ENCODE measurements at regions of chr2 and their contacts with region 1.

Region 1: GRCh38 chr2:85826990-85827878 is 61.6 kb downstream of the ST3GAL5 start:
- DNase-seq: peak in 1 of 2 donors; percentile 83
- ATAC-seq: peak; percentile 95

Region 2: DNA sequence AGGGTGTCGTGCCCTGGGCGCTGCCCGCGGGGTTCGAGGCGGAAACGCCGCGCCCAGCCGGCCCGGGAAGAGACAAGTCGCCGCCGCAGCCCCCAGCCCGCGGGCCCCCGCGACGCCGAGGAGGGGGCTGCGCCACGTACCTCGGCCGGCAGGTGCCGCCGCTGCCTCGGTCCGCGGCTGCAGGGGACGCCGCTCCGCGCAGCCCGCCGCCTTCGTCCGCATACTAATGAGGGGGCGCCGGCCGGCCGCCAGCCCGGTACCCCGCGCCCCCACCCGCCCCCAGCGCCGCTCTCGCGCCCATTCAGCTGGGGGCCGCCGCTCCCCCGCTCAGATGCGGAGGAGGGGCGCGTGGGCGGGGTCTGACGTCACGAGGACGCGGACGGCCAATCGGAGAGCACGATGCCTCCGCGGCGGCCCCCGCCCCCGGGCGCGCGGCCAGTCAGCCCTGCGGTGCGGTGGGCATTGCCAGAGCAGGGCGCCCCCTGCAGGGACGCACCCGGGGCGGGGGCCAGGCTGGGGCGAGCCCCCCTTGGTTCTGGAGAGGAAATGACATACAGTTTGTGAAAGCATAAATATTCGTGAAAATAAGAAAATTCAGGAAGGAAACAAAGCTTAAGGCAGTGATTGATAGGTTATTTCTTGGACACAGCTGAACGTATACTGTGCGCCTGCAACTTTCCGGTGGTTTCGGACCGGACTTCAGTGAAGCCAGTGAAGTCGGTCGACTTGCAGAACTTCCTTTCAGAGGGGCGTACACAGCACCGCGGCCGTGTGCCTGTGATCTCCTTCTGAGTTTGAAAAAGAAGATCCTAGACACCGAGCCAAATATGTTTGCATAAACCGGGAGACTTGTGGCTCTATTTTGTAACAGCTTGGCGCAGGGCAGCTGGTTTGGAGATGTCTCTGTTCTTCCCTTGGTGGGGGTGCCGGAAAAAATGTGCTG is 61.7 kb after region 1 on chr2 and contains the start of gene ST3GAL5:
- intact Hi-C with region 1: loop called in 1 of 2 experiments (anchors 5 kb)
- DNase-seq: peak; percentile 84 to 94
- ATAC-seq: peak; percentile 89
- total RNA-seq, gene ST3GAL5: 2.9 to 8.7 TPM

Region 3: DNA sequence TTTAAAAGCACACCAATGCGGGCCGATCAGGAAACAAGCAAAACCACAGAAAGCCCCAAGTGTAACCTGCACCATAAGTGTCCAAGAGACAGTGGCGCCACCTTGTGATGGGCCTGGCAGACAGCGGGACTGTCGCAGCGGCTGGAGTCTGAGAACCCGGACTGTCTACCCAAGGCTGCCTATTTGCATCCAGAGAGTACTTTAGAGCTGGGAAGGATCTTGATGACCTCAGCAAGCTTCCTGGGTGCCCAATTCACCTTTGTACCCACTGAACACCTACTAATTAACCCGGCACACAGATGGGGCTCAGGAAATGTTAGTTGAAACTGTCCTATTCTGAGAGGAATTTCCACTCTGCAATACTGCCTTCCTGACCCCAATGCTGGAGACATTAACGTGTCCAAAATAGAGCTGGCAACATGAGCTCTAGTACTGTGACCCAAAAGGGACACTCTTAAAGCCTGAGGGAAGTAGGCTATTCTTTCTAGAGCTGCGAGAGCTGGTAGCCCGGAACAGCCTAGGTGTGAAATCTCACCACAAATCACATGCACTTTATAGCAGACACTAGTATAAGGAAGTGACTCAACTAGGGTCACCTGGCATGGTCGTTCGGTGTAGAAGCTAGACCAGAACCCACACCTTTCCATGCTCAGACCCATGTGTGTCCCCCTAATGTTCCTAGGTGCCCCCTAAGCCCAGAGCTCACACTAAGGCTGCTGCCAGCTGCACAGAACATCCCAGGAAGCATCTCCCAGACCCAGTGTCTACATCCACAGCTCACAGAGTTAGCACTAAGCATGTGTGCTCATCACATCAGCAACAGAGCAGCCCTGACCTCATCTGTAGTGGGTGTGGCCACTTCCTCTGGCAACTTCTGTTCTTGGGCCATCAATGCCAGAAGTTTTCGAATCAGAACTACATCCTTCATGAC is 253.0 kb after region 1 on chr2:
- intact Hi-C with region 1: loop called (anchors 2 to 5 kb)
- DNase-seq: peak; percentile 84 to 92
- ATAC-seq: peak; percentile 91